ENCODE measurements at regions of chrX and their contacts with region 1.

Region 1: GRCh38 chrX:32408389-32408788 is 803.0 kb downstream of the DMD start:
- DNase-seq: peak; percentile 62
- H3K4me3 ChIP-seq: no peak overlapping the region
- H3K27ac ChIP-seq: no peak overlapping the region
- H3K4me1 ChIP-seq: no peaks in the 10 kb centered on the region
- CTCF ChIP-seq: peak; percentile 79

Region 2: GRCh38 chrX:32024072-32024471 is 384.3 kb before region 1 on chrX:
- CTCF ChIA-PET with region 1: no interaction called
- POLR2A ChIA-PET with region 1: no interaction called
- intact Hi-C with region 1: no loop called
- DNase-seq: no peak
- H3K4me3 ChIP-seq: no peak overlapping the region
- H3K27ac ChIP-seq: no peak overlapping the region
- H3K4me1 ChIP-seq: no peaks in the 10 kb centered on the region
- CTCF ChIP-seq: no peak

Region 3: DNA sequence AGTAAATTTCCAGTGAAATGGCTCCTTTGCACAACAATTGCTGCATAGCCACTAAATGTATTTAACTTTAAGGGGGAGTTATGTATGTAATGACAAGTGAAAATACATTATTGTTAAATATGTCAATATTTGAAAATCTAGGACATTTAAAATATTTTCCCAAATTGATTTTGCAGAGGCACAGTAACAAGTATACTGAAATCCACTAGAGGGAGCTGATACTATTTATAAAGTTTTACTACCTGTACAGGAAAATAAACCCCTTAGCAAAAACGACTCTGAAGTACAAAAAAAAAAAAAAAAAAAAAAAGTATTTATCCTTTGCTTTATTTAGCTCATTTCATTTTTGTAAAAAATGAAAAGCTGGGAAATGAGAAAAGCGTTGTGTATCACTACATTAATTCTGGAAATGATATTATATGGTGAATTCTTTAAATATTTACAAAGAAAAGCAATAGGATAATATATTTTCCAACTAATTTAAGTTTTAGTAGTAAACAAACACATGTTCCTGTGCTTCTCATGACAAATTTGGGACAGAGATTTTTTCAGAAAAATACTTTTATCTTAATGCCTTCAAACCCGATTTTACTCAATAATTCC is 75.2 kb after region 1 on chrX:
- CTCF ChIA-PET with region 1: no interaction called
- POLR2A ChIA-PET with region 1: no interaction called
- intact Hi-C with region 1: loop called (anchors 10 kb)
- DNase-seq: peak; percentile 48
- H3K4me3 ChIP-seq: no peak overlapping the region
- H3K27ac ChIP-seq: no peak overlapping the region
- H3K4me1 ChIP-seq: no peaks in the 10 kb centered on the region
- CTCF ChIP-seq: peak; percentile 73

Region 4: GRCh38 chrX:32530802-32531403 is 122.5 kb after region 1 on chrX:
- CTCF ChIA-PET with region 1: no interaction called
- POLR2A ChIA-PET with region 1: no interaction called
- intact Hi-C with region 1: loop called (anchors 2 kb)
- DNase-seq: peak; percentile 71
- H3K4me3 ChIP-seq: peak overlapping the region; percentile 44
- H3K27ac ChIP-seq: no peak overlapping the region
- H3K4me1 ChIP-seq: no peaks in the 10 kb centered on the region
- CTCF ChIP-seq: peak; percentile 86

Region 5: GRCh38 chrX:32673193-32673592 is 264.8 kb after region 1 on chrX:
- CTCF ChIA-PET with region 1: no interaction called
- POLR2A ChIA-PET with region 1: interaction called, 3 read pairs
- intact Hi-C with region 1: loop called (anchors 2 kb)
- DNase-seq: peak; percentile 30
- H3K4me3 ChIP-seq: no peak overlapping the region
- H3K27ac ChIP-seq: no peak overlapping the region
- H3K4me1 ChIP-seq: no peaks in the 10 kb centered on the region
- CTCF ChIP-seq: peak; percentile 66

Region 6: GRCh38 chrX:33336783-33337182 is 928.4 kb after region 1 on chrX:
- CTCF ChIA-PET with region 1: no interaction called
- POLR2A ChIA-PET with region 1: no interaction called
- intact Hi-C with region 1: loop called (anchors 5 kb)
- DNase-seq: peak; percentile 68
- H3K4me3 ChIP-seq: no peak overlapping the region
- H3K27ac ChIP-seq: no peak overlapping the region
- H3K4me1 ChIP-seq: peaks cover 16% of the 10 kb centered on the region
- CTCF ChIP-seq: peak; percentile 79

Region 7: GRCh38 chrX:33434256-33435092 is 1026.1 kb after region 1 on chrX:
- CTCF ChIA-PET with region 1: no interaction called
- POLR2A ChIA-PET with region 1: no interaction called
- intact Hi-C with region 1: loop called (anchors 10 kb)
- DNase-seq: peak; percentile 73
- H3K4me3 ChIP-seq: peak overlapping the region; percentile 29
- H3K27ac ChIP-seq: no peak overlapping the region
- H3K4me1 ChIP-seq: no peaks in the 10 kb centered on the region
- CTCF ChIP-seq: peak; percentile 76